ENCODE measurements at regions of chr19 and their contacts with region 1.

Region 1: DNA sequence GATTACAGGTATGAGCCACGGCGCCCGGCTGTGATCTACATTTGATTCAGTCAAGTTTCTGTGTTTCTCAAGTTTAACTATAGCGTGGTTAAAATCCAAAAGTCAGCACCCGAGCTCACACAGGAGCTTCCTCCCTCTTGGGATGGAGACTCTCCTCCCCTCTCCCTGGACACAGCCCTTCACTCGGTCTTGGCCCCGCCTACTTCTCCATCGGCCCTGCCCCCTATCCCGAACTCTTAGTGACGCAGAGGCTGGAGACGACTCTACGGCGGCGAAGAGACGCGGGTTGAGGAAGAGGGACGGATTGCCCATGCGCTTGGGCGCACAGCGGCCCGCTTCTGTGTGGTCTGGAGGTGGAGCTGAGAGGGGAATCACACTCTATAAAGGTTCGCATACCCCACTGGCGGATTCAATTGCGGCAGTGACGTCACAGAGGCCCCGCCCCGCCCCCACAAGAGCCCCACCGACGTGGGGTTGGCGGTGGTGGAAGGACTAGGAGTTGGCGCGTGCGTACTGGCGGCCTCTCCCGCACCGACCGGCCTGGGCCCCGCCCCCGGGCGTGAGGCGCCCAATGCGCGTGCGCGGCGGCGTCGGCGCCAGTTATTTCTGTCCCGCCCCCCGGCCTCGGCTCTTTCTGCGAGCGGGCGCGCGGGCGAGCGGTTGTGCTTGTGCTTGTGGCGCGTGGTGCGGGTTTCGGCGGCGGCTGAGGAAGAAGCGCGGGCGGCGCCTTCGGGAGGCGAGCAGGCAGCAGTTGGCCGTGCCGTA is at the start of gene TRIM28:
- DNase-seq: peak; percentile 100
- CTCF ChIP-seq: no peak

Region 2: GRCh38 chr19:58531034-58531840 is 12.8 kb before region 1 on chr19:
- CTCF ChIA-PET with region 1: no interaction called
- POLR2A ChIA-PET with region 1: no interaction called
- DNase-seq: no peak
- CTCF ChIP-seq: no peak

Region 3: GRCh38 chr19:58558623-58559274 is 14.7 kb after region 1 on chr19:
- CTCF ChIA-PET with region 1: interaction called, 12 read pairs
- POLR2A ChIA-PET with region 1: interaction called, 32 read pairs
- DNase-seq: peak; percentile 95
- CTCF ChIP-seq: peak; percentile 6

Measured in GM10248 (cell line).